Mammary epithelial cell (primary cell): ENCODE measurements at regions of chr20 and their contacts with region 1.

Region 1: GRCh38 chr20:9602847-9603183 is 88.4 kb downstream of the LAMP5 start:
- DNase-seq: no peak
- H3K4me3 ChIP-seq: no peak overlapping the region
- H3K27ac ChIP-seq: no peak overlapping the region
- H3K4me1 ChIP-seq: peaks cover 2% of the 10 kb centered on the region
- H3K27me3 ChIP-seq: no peaks in the 10 kb centered on the region
- CTCF ChIP-seq: no peak

Region 2: GRCh38 chr20:9543214-9543613 is 59.6 kb before region 1 on chr20:
- CTCF ChIA-PET with region 1: no interaction called
- dilution Hi-C with region 1: loop called (anchors 5 kb)
- in situ Hi-C with region 1: no loop called
- intact Hi-C with region 1: no loop called
- DNase-seq: no peak
- H3K4me3 ChIP-seq: no peak overlapping the region
- H3K27ac ChIP-seq: no peak overlapping the region
- H3K4me1 ChIP-seq: no peaks in the 10 kb centered on the region
- H3K27me3 ChIP-seq: peaks cover 2% of the 10 kb centered on the region
- CTCF ChIP-seq: no peak